Ascending aorta (tissue), 2 donors: ENCODE measurements at regions of chr3 and their contacts with region 1.

Region 1: GRCh38 chr3:34683851-34684250 is 885.4 kb downstream of the PDCD6IP start:
- DNase-seq: peak in 1 of 2 donors; percentile 69
- H3K4me3 ChIP-seq: no peak overlapping the region
- H3K27ac ChIP-seq: no peak overlapping the region
- H3K4me1 ChIP-seq: no peaks in the 10 kb centered on the region
- H3K27me3 ChIP-seq: no peaks in the 10 kb centered on the region
- CTCF ChIP-seq: peak; percentile 34 to 65 (median 47)

Region 2: DNA sequence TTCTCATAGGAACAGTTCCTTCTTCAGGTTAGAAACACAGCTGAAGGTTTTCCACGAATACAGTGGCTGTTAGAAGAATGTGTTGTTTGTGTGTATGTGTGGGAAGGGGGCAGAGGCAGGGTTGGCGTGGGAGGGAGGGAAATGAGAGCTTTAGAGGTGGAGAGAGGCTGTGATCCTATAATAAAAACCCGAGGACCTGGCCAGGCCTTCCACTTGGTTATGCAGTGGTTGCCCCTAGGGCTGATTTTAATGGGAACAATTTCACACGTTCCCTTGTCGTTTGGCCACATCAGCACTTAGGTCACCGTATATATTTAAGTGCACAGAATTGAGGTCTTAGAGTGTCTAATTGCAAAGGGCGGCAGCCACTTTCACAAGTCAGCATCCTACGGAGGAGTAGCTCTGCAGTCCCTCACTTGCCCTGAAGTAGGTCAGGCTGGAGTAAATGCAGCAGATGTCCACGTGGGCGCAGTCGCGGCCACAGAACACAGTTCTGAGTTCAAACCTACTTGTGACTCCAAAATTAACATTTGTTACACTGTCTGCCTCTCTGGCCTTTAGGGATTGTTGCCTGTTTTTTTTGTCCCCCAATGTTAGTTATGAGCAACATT is 799.8 kb before region 1 on chr3:
- intact Hi-C with region 1: loop called (anchors 1 kb)
- DNase-seq: no peak
- H3K4me3 ChIP-seq: peak overlapping the region; percentile 2 to 51
- H3K27ac ChIP-seq: no peak overlapping the region
- H3K4me1 ChIP-seq: no peaks in the 10 kb centered on the region
- H3K27me3 ChIP-seq: no peaks in the 10 kb centered on the region
- CTCF ChIP-seq: peak in 2 of 3 experiments; percentile 35 to 45

Region 3: GRCh38 chr3:33980252-33980651 is 703.6 kb before region 1 on chr3:
- intact Hi-C with region 1: loop called (anchors 1 kb)
- DNase-seq: no peak
- H3K4me3 ChIP-seq: no peak overlapping the region
- H3K27ac ChIP-seq: no peak overlapping the region
- H3K4me1 ChIP-seq: no peaks in the 10 kb centered on the region
- H3K27me3 ChIP-seq: no peaks in the 10 kb centered on the region
- CTCF ChIP-seq: peak in 2 of 3 experiments; percentile 33 to 70

Region 4: GRCh38 chr3:34106879-34107278 is 577.0 kb before region 1 on chr3:
- intact Hi-C with region 1: loop called (anchors 10 kb)
- DNase-seq: no peak
- H3K4me3 ChIP-seq: no peak overlapping the region
- H3K27ac ChIP-seq: no peak overlapping the region
- H3K4me1 ChIP-seq: no peaks in the 10 kb centered on the region
- H3K27me3 ChIP-seq: no peaks in the 10 kb centered on the region
- CTCF ChIP-seq: peak in 2 of 3 experiments; percentile 30 to 45